ENCODE measurements at regions of chr6 and their contacts with region 1.

Region 1: DNA sequence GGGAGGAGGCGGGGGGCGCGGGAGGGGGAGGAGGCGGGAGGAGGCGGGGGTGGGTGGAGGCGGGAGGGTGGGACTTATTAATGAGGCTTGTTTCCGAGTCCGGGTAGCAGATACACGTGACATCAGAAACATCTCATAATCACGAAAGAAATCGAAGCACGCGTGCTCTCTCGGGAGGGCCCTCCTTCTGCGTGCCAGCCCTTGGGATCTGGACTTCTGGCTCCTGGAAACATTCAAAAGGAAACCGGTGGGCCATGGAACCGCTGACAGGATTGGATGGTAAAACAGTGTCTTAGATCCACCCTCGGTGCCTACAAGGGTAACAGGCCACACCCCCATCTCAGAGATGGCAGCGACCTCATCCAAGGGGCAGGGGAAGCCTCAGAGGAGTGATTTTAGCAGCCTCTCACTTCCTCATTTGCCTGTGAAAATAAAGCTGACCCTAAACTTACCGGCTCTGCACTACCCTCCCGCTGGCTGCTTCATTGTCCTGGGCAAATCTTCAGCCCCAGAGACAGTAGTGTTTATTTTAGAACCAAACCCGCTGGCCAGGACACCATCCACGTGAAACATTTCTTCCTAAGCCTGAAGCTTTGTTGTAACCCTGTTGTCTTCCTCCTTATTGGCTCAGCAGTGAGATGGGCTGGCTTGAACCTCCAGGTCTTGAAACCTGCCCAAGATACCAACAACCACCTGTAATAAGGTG is 97.5 kb downstream of the PSMG4 start:
- DNase-seq: peak; percentile 36 to 87 (median 58)
- ATAC-seq: peak; percentile 78
- H3K4me3 ChIP-seq: peak overlapping the region; percentile 50
- H3K4me3 Mint-ChIP-seq: peak overlapping the region; percentile 85
- H3K27ac ChIP-seq: peak overlapping the region; percentile 67 to 71
- H3K27ac Mint-ChIP-seq: peak overlapping the region; percentile 94
- H3K4me1 ChIP-seq: peaks cover 33% of the 10 kb centered on the region
- H3K4me1 Mint-ChIP-seq: peaks cover 47% of the 10 kb centered on the region
- H3K27me3 ChIP-seq: no peaks in the 10 kb centered on the region
- H3K27me3 Mint-ChIP-seq: no peaks in the 10 kb centered on the region
- CTCF ChIP-seq: no peak

Region 2: DNA sequence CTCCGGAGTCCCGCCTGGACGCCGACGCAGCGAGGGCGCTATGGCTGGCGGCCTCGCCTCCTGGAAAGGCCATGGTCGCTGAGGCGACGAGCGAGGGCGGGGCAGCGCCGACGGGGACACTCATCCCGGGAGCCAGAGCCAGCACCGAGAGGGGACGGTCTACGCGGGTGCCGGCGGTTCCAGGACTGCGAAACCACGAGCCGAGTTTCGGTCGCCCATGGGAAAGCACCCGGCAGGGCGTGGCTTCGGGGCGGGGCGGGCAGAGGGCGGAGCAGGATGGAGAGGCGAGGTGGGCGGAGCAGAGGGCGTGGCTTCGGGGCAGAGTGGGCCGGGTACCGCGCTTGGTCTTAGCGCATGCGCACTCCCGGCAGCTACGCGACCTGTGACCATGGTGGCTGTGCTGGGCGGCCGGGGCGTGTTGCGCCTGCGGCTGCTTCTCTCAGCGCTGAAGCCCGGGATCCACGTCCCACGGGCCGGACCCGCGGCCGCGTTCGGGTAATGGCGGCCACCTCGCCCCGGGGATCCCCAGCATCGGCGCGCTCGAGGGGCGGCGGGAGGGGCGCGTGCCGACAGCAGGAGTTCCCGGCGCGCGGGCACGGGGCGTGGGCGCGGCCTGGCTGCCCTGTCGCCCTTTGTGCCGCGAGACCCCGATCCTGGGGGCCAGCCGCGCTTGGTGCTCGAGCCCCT is 237.7 kb before region 1 on chr6 and contains the start of gene BPHL:
- CTCF ChIA-PET with region 1: no interaction called
- POLR2A ChIA-PET with region 1: no interaction called
- intact Hi-C with region 1: loop called in 1 of 2 experiments (anchors 2 kb)
- DNase-seq: peak; percentile 98 to 100 (median 99)
- ATAC-seq: peak; percentile 90
- H3K4me3 ChIP-seq: peak within 1 kb of the TSS; percentile 67
- H3K4me3 Mint-ChIP-seq: peak within 1 kb of the TSS; percentile 93
- H3K27ac ChIP-seq: peak within 1 kb of the TSS; percentile 91 to 96
- H3K27ac Mint-ChIP-seq: peak within 1 kb of the TSS; percentile 91
- H3K4me1 ChIP-seq: peaks cover 15% of the 10 kb centered on the region
- H3K4me1 Mint-ChIP-seq: peaks cover 19% of the 10 kb centered on the region
- H3K27me3 ChIP-seq: no peaks in the 10 kb centered on the region
- H3K27me3 Mint-ChIP-seq: no peaks in the 10 kb centered on the region
- CTCF ChIP-seq: no peak
- total RNA-seq, gene BPHL: 5.2 to 5.7 TPM

Region 3: GRCh38 chr6:3247255-3248146 is 108.7 kb before region 1 on chr6:
- CTCF ChIA-PET with region 1: no interaction called
- POLR2A ChIA-PET with region 1: no interaction called
- intact Hi-C with region 1: no loop called
- DNase-seq: no peak
- ATAC-seq: no peak
- H3K4me3 ChIP-seq: no peak overlapping the region
- H3K4me3 Mint-ChIP-seq: no peak overlapping the region
- H3K27ac ChIP-seq: no peak overlapping the region
- H3K27ac Mint-ChIP-seq: no peak overlapping the region
- H3K4me1 ChIP-seq: peaks cover 11% of the 10 kb centered on the region
- H3K4me1 Mint-ChIP-seq: peaks cover 14% of the 10 kb centered on the region
- H3K27me3 ChIP-seq: peaks cover 11 to 26% of the 10 kb centered on the region in 2 experiments
- H3K27me3 Mint-ChIP-seq: peaks cover 72% of the 10 kb centered on the region
- CTCF ChIP-seq: no peak

Region 4: DNA sequence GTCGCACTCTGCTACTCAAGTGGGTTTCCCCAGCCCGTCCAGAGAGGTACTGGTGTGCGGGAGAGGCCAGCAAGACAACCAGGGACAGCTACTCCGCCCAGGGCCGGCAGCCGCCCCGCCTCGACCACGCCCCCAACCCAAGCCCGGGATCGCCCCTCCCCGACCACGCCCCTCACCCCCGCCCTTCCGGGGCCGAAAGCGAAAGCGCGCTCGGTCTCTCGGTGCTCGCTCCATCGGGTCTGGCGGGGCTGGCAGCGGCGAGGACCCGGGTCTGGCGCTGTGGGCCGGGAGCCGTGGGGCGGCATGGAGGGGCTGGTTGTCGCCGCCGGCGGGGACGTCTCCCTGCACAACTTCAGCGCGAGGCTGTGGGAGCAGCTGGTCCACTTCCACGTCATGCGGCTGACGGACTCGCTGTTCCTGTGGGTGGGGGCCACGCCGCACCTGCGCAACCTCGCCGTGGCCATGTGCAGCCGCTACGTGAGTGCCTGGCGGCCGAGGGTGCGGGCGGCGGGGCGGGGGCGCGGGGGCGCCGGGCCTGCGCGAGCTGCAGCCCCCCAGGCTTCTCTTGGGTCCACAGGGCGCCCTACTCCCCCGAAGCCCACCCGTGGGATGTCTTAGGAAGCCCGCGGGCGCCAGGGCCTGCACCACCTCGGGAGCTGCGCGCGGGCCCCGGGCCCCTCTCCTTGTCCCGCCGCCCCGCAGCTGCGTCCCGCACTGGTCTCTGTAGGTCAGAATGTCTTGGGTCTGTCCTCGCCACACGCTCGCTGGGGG is 97.3 kb before region 1 on chr6 and contains the start of gene PSMG4:
- CTCF ChIA-PET with region 1: no interaction called
- POLR2A ChIA-PET with region 1: no interaction called
- intact Hi-C with region 1: loop called in 1 of 2 experiments (anchors 2 kb)
- DNase-seq: peak; percentile 83 to 96 (median 92)
- ATAC-seq: peak; percentile 74
- H3K4me3 ChIP-seq: peak within 1 kb of the TSS; percentile 80
- H3K4me3 Mint-ChIP-seq: peak within 1 kb of the TSS; percentile 96
- H3K27ac ChIP-seq: peak within 1 kb of the TSS in 1 of 2 donors; percentile 50
- H3K27ac Mint-ChIP-seq: peak within 1 kb of the TSS; percentile 92
- H3K4me1 ChIP-seq: peaks cover 45% of the 10 kb centered on the region
- H3K4me1 Mint-ChIP-seq: peaks cover 42% of the 10 kb centered on the region
- H3K27me3 ChIP-seq: no peaks in the 10 kb centered on the region
- H3K27me3 Mint-ChIP-seq: no peaks in the 10 kb centered on the region
- CTCF ChIP-seq: no peak
- total RNA-seq, gene PSMG4: 12.3 to 12.8 TPM

Region 5: DNA sequence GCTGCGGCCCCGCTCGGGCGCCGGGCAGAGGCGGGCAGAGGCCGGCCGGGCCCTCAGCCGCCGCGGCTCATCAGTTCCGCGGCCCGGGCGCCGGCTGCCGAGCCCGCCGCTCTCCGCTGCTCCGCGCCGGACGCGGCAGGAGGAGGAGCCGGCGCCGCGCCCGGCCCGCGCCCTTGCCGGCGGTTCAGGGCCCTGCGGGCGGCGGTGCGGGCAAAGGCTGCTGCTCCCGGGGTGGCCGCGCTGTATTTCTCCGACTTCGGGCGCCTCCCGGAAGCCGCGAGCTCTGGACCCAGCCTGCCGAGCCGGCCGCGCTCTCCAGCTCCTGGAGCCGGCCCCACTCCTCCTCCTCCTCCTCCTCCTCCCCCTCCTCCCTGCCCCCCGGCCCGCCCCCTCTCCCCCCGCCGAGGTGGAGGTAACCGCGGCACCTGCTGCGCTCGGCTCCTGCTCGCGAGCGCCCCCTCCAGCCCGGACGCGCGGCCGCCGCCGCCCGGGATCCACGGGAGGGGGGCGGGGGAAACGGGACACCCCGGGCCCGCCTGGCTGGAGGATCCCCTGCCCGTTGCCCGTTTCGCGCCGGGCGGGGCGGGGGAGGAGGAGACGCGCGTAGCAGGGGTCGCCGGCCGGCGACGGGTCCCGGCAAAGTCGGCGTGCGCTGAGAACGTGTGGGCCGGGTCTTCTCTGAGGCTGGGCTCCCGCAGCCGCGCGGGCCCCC is 100.7 kb after region 1 on chr6 and contains the start of gene SLC22A23:
- CTCF ChIA-PET with region 1: no interaction called
- POLR2A ChIA-PET with region 1: no interaction called
- intact Hi-C with region 1: loop called (anchors 2 kb)
- DNase-seq: peak; percentile 63 to 91 (median 77)
- ATAC-seq: peak; percentile 52
- H3K4me3 ChIP-seq: peak within 1 kb of the TSS; percentile 72
- H3K4me3 Mint-ChIP-seq: peak within 1 kb of the TSS; percentile 89
- H3K27ac ChIP-seq: no peak within 1 kb of the TSS
- H3K27ac Mint-ChIP-seq: peak within 1 kb of the TSS; percentile 63
- H3K4me1 ChIP-seq: peaks cover 36% of the 10 kb centered on the region
- H3K4me1 Mint-ChIP-seq: peaks cover 7% of the 10 kb centered on the region
- H3K27me3 ChIP-seq: peaks cover 6 to 15% of the 10 kb centered on the region in 2 experiments
- H3K27me3 Mint-ChIP-seq: peaks cover 15% of the 10 kb centered on the region
- CTCF ChIP-seq: peak; percentile 79
- total RNA-seq, gene SLC22A23: 13.4 to 13.6 TPM

Region 6: DNA sequence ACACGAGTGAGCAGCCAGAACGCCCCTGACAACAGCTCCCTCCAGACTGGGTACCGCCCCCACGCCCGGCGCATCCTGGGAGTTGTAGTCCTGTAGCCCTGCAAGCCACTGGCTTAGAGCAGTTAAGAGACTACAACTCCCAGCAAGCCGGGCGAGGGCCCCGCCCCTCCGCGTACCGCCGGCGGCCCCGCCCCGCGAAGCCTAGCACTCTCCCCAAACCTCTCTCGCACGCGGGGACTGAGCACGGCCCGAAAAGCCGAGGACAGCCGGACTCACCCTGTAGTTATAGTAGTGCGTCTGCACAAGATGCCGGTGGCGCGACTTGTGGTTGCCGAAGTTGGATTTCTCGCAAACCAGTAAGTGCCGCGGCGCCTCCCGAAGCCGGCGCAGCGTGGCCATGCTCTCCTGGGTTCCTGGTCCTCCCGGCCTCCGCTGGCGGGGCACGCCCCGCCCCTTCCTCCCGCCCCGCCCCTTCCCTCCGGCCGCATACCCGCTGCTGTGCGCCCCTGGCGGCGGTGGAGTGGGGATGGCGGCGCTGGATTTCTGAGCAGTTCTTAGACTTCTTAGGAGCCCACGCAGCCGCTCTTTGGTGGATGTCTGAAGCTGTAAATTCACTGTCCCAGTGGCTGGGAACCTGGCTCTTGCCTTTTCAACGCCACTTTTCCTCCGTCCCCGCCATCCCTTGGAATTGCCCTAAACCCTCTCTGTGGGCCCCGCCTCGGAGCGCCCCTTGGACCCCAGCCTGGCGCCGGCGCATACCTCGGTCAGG is 1647.6 kb after region 1 on chr6 and contains the start of gene RPP40:
- CTCF ChIA-PET with region 1: no interaction called
- POLR2A ChIA-PET with region 1: no interaction called
- intact Hi-C with region 1: loop called in 1 of 2 experiments (anchors 5 kb)
- DNase-seq: peak; percentile 95 to 100 (median 98)
- ATAC-seq: peak; percentile 92
- H3K4me3 ChIP-seq: peak within 1 kb of the TSS; percentile 81
- H3K4me3 Mint-ChIP-seq: peak within 1 kb of the TSS; percentile 90
- H3K27ac ChIP-seq: peak within 1 kb of the TSS; percentile 83
- H3K27ac Mint-ChIP-seq: peak within 1 kb of the TSS; percentile 91
- H3K4me1 ChIP-seq: peaks cover 15% of the 10 kb centered on the region
- H3K4me1 Mint-ChIP-seq: peaks cover 17% of the 10 kb centered on the region
- H3K27me3 ChIP-seq: no peaks in the 10 kb centered on the region
- H3K27me3 Mint-ChIP-seq: no peaks in the 10 kb centered on the region
- CTCF ChIP-seq: peak; percentile 77
- total RNA-seq, gene RPP40: 0.36 to 0.69 TPM

Measured in CD4-positive, alpha-beta T cell (primary cell).